Mammary epithelial cell (primary cell): ENCODE measurements at regions of chr11 and their contacts with region 1.

Region 1: DNA sequence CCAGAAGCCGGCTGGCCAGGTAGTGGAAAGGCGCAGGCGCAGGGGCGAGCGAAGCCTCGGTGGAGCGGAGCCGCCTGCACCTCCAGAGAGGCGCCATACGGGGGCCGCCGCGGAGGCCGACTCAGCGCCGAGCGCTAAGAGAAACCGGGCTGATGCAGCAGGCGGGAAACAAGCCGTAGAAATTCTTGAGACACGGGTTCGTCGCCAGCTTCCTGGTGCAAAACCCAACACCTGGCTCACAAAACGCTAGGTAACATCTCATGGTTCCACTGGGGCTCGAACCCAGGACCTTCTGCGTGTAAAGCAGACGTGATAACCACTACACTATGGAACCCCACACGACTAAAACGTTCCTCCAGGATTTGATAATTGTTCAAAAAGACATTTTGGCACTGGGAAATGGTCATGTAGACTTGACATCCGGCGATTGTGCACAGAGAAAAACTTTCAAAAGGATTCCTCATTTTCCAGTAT is 39.1 kb downstream of the OR4D9 start:
- DNase-seq: peak; percentile 97
- H3K4me3 ChIP-seq: peak overlapping the region; percentile 51 to 69 (median 62)
- H3K27ac ChIP-seq: peak overlapping the region; percentile 52
- H3K4me1 ChIP-seq: peaks cover 9% of the 10 kb centered on the region
- H3K27me3 ChIP-seq: no peaks in the 10 kb centered on the region
- CTCF ChIP-seq: peak; percentile 28 to 62

Region 2: GRCh38 chr11:59479906-59480305 is 70.5 kb before region 1 on chr11:
- CTCF ChIA-PET with region 1: no interaction called
- dilution Hi-C with region 1: no loop called
- in situ Hi-C with region 1: no loop called
- intact Hi-C with region 1: no loop called
- DNase-seq: no peak
- H3K4me3 ChIP-seq: no peak overlapping the region
- H3K27ac ChIP-seq: no peak overlapping the region
- H3K4me1 ChIP-seq: no peaks in the 10 kb centered on the region
- H3K27me3 ChIP-seq: no peaks in the 10 kb centered on the region
- CTCF ChIP-seq: no peak

Region 3: GRCh38 chr11:59560702-59561469 is 10.5 kb after region 1 on chr11:
- CTCF ChIA-PET with region 1: interaction called, 6 read pairs
- dilution Hi-C with region 1: no loop called
- in situ Hi-C with region 1: no loop called
- intact Hi-C with region 1: loop called (anchors 1 kb)
- DNase-seq: peak; percentile 88
- H3K4me3 ChIP-seq: peak overlapping the region; percentile 72 to 90 (median 86)
- H3K27ac ChIP-seq: peak overlapping the region; percentile 94
- H3K4me1 ChIP-seq: peaks cover 8% of the 10 kb centered on the region
- H3K27me3 ChIP-seq: no peaks in the 10 kb centered on the region
- CTCF ChIP-seq: no peak

Region 4: GRCh38 chr11:59601788-59602187 is 51.4 kb after region 1 on chr11:
- CTCF ChIA-PET with region 1: no interaction called
- dilution Hi-C with region 1: no loop called
- in situ Hi-C with region 1: no loop called
- intact Hi-C with region 1: no loop called
- DNase-seq: no peak
- H3K4me3 ChIP-seq: no peak overlapping the region
- H3K27ac ChIP-seq: no peak overlapping the region
- H3K4me1 ChIP-seq: no peaks in the 10 kb centered on the region
- H3K27me3 ChIP-seq: no peaks in the 10 kb centered on the region
- CTCF ChIP-seq: no peak

Region 5: DNA sequence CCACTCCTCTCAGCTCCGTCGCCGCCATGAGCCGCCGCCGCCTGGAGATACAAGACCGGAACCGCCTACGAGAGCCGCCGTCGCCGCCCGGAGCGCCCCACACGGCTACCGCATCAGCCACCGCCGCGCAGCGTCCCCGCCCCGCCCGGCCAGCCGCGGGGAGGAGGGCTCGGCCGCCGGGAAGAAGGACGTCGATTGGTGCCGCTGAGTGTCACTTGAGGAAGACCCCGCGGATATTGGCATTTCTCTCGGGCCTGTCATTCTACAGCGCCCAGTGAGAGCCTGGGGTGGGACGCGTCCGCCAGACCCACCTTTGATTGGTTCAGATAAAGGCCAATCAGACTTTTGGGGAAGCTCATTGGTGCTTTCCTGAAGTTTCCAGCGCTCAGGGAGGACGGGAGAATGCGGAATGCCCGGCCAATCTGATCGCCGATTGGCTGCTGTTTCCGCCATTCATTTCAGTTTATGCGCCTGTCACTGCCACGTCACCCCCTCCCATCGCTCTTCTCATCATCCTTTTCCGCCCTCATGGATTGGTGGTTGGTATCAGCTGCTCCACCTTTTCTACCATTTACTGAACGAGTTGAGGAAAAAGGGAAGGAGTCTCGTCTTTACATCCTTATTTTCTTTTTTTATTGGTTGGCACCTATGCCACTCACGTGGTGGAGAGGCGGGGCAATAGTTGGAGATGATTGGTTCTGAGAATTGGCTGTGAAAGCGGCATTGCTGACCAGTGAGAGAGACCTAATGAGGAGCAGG is 65.4 kb after region 1 on chr11 and contains the start of gene OSBP:
- CTCF ChIA-PET with region 1: no interaction called
- dilution Hi-C with region 1: loop called (anchors 10 kb)
- in situ Hi-C with region 1: no loop called
- intact Hi-C with region 1: loop called (anchors 1 kb)
- DNase-seq: peak; percentile 100
- H3K4me3 ChIP-seq: peak within 1 kb of the TSS; percentile 68 to 85 (median 79)
- H3K27ac ChIP-seq: peak within 1 kb of the TSS; percentile 79
- H3K4me1 ChIP-seq: peaks cover 17% of the 10 kb centered on the region
- H3K27me3 ChIP-seq: no peaks in the 10 kb centered on the region
- CTCF ChIP-seq: no peak
- total RNA-seq, gene OSBP: 34.0 to 52.0 TPM

Region 6: DNA sequence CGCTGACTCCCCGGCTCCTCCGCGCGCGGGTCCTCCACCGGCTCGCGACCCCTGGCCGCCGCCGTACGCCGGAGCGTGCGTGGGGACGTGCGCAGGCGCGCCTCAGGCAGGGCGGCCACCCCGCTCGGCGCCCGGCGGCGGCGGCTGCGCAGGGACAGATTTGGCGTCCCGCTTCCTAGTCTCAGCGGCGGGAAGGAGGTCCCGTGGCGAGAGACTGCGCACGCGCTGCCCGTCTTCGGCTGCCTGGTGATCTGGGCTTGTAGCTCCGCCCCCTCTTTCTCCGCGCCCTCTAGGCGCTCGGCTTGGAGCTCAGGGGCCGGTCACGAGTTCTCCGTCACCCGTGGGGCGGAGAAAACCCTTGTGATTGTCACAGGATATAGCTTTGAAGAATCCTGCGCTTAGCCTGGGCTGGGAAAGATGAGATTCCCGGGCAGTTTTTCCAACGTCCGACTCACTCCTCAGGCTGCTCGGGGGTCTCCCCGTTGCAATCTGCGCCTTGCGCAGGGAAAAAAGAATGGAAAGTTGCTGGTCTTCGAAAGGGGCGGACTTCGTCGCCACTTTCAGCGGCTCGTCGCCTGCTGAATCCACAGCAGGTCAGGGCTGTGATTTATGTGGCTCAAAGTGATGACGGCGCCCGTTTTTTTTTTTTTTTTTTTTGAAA is 118.7 kb after region 1 on chr11 and contains the start of gene PATL1:
- CTCF ChIA-PET with region 1: no interaction called
- dilution Hi-C with region 1: no loop called
- in situ Hi-C with region 1: no loop called
- intact Hi-C with region 1: loop called (anchors 1 kb)
- DNase-seq: peak; percentile 97
- H3K4me3 ChIP-seq: peak within 1 kb of the TSS; percentile 70 to 90 (median 78)
- H3K27ac ChIP-seq: peak within 1 kb of the TSS; percentile 94
- H3K4me1 ChIP-seq: peaks cover 15% of the 10 kb centered on the region
- H3K27me3 ChIP-seq: no peaks in the 10 kb centered on the region
- CTCF ChIP-seq: no peak
- total RNA-seq, gene PATL1: 11.2 to 42.8 TPM

Region 7: DNA sequence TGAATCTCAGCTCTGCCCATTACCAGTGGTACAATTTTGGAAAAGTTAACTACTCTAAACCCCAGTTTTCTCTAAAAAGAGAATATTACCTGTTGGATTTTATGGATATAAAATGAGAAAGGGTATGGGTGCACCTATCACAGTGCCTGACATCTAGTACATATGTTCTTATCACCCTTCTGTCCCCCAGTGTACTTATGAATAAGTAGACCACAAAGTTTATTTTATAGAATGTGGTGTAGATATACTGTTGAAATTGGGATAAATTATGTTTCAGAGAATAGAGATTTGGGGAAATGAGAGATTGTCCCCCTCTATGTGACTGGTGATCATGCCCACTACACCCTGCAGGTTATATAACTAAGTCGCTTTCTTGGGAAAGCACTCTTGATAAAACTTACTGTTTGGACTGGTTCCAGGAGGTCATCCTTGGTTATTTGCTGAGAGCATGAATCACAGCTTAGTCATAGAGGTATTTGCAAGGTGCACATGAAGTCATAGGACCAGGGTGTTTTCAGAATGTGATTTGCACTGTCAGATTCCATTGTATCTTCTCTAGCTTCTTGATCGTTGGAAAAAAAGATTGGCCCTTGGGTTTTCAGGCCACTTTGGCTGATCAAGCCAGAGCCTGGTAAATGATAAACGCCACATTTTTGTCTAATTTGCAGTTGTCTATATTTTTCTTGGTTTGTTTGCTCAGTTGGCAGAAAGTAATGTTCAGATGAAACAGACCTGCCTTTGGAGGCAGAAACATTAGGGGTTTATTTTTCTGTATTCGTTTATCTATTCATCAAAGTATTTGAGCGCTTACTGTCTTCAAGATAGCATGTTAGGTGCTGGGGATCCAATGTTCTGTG is 226.0 kb after region 1 on chr11:
- CTCF ChIA-PET with region 1: no interaction called
- dilution Hi-C with region 1: no loop called
- in situ Hi-C with region 1: loop called in 1 of 2 experiments (anchors 25 kb)
- intact Hi-C with region 1: no loop called
- DNase-seq: peak; percentile 93
- H3K4me3 ChIP-seq: no peak overlapping the region
- H3K27ac ChIP-seq: no peak overlapping the region
- H3K4me1 ChIP-seq: peaks cover 17% of the 10 kb centered on the region
- H3K27me3 ChIP-seq: no peaks in the 10 kb centered on the region
- CTCF ChIP-seq: no peak

Region 8: DNA sequence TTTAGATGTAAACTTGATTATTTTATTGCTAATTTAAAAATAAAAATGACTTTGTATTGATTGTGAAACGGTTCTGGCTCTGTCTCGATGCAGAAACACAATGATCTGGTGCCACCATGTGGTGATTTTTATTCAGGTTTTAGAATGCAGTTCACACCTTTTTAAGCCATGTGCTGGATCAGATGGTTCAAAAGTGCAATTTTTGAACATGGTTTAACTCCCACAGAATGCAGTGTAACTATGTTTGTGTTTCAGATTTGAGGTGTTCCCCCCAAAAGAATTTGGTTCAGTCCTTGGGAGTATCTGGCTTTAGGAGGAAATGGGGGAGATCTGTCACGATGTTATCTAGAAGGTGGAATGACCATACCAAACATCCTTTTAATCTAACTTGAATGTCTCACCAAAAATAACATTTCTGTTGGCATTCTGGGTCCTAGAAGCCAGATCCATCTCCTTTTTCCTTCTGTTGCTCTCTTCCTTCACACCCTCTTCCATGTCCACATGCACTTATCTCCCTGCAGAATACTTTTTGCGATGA is 252.3 kb after region 1 on chr11:
- CTCF ChIA-PET with region 1: no interaction called
- dilution Hi-C with region 1: no loop called
- in situ Hi-C with region 1: loop called (anchors 10 to 25 kb)
- intact Hi-C with region 1: no loop called
- DNase-seq: peak; percentile 44
- H3K4me3 ChIP-seq: no peak overlapping the region
- H3K27ac ChIP-seq: no peak overlapping the region
- H3K4me1 ChIP-seq: peaks cover 6% of the 10 kb centered on the region
- H3K27me3 ChIP-seq: no peaks in the 10 kb centered on the region
- CTCF ChIP-seq: peak; percentile 59 to 67